CD8-positive, alpha-beta T cell (primary cell): ENCODE measurements at regions of chr5 and their contacts with region 1.

Region 1: DNA sequence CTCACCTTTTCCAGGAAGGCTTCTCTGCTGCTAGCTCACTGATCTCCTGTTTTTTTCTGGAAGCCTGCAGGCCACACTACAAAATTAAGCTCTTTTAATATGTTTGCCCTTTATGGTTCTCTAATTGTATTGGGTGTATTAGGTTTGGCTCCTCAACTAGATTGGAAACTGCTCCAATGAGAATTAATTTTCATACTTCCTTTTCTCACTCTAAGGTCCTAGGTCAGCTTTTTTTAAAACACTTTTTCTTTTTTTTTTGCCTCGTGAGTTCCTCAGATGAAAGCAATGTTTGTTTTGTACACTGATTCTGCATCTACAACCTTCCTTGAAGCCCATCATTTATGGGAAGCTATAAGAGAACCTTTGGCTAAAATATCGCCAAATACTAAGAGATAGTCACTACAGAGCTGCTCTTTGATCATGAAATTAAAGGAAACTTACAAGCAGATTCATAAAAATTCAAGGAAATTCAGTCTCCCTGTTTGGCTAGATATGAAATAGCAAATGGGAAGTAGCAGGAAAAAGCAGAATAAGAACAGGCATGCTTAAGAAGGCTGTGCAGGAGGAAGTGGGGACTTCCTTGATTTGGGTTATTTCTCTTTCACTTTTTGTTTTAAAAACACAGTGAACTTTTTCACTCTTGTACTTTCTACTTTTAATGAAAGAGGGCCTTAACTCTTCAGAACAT is 55.2 kb upstream of the FYB1 start:
- DNase-seq: peak in 2 of 9 experiments; percentile 55 to 77
- ATAC-seq: peak; percentile 64
- H3K4me3 ChIP-seq: peak overlapping the region; percentile 40 to 42
- H3K4me3 Mint-ChIP-seq: peak overlapping the region; percentile 86
- H3K27ac ChIP-seq: peak overlapping the region; percentile 54 to 87
- H3K27ac Mint-ChIP-seq: peak overlapping the region; percentile 98
- H3K4me1 ChIP-seq: peaks cover 41% of the 10 kb centered on the region
- H3K4me1 Mint-ChIP-seq: peaks cover 58% of the 10 kb centered on the region
- H3K27me3 ChIP-seq: no peaks in the 10 kb centered on the region
- H3K27me3 Mint-ChIP-seq: no peaks in the 10 kb centered on the region
- CTCF ChIP-seq: no peak

Region 2: GRCh38 chr5:39255406-39255805 is 19.1 kb before region 1 on chr5:
- CTCF ChIA-PET with region 1: interaction called, 4 read pairs
- POLR2A ChIA-PET with region 1: no interaction called
- intact Hi-C with region 1: loop called in 1 of 2 experiments (anchors 2 kb)
- DNase-seq: no peak
- ATAC-seq: no peak
- H3K4me3 ChIP-seq: no peak overlapping the region
- H3K4me3 Mint-ChIP-seq: no peak overlapping the region
- H3K27ac ChIP-seq: no peak overlapping the region
- H3K27ac Mint-ChIP-seq: no peak overlapping the region
- H3K4me1 ChIP-seq: peaks cover 3% of the 10 kb centered on the region
- H3K4me1 Mint-ChIP-seq: peaks cover 34% of the 10 kb centered on the region
- H3K27me3 ChIP-seq: no peaks in the 10 kb centered on the region
- H3K27me3 Mint-ChIP-seq: no peaks in the 10 kb centered on the region
- CTCF ChIP-seq: no peak